ENCODE measurements at regions of chr4 and their contacts with region 1.

Region 1: GRCh38 chr4:90293320-90293719 is 166.1 kb downstream of the CCSER1 start:
- DNase-seq: peak; percentile 27
- ATAC-seq: no peak
- H3K4me3 ChIP-seq: no peak overlapping the region
- H3K27ac ChIP-seq: no peak overlapping the region
- H3K4me1 ChIP-seq: no peaks in the 10 kb centered on the region
- H3K27me3 ChIP-seq: no peaks in the 10 kb centered on the region
- CTCF ChIP-seq: peak; percentile 44
- POLR2A ChIP-seq: no peak
- RAD21 ChIP-seq: peak; percentile 49

Region 2: GRCh38 chr4:89434364-89434988 is 858.8 kb before region 1 on chr4:
- CTCF ChIA-PET with region 1: no interaction called
- POLR2A ChIA-PET with region 1: no interaction called
- dilution Hi-C with region 1: no loop called
- in situ Hi-C with region 1: no loop called
- intact Hi-C with region 1: loop called (anchors 5 kb)
- DNase-seq: peak; percentile 35
- ATAC-seq: peak; percentile 84
- H3K4me3 ChIP-seq: no peak overlapping the region
- H3K27ac ChIP-seq: no peak overlapping the region
- H3K4me1 ChIP-seq: no peaks in the 10 kb centered on the region
- H3K27me3 ChIP-seq: 0 out of 2 replicates have a peak, but pooled peaks cover 1% of the 10 kb centered on the region
- CTCF ChIP-seq: peak; percentile 69
- POLR2A ChIP-seq: no peak
- RAD21 ChIP-seq: peak; percentile 76

Region 3: DNA sequence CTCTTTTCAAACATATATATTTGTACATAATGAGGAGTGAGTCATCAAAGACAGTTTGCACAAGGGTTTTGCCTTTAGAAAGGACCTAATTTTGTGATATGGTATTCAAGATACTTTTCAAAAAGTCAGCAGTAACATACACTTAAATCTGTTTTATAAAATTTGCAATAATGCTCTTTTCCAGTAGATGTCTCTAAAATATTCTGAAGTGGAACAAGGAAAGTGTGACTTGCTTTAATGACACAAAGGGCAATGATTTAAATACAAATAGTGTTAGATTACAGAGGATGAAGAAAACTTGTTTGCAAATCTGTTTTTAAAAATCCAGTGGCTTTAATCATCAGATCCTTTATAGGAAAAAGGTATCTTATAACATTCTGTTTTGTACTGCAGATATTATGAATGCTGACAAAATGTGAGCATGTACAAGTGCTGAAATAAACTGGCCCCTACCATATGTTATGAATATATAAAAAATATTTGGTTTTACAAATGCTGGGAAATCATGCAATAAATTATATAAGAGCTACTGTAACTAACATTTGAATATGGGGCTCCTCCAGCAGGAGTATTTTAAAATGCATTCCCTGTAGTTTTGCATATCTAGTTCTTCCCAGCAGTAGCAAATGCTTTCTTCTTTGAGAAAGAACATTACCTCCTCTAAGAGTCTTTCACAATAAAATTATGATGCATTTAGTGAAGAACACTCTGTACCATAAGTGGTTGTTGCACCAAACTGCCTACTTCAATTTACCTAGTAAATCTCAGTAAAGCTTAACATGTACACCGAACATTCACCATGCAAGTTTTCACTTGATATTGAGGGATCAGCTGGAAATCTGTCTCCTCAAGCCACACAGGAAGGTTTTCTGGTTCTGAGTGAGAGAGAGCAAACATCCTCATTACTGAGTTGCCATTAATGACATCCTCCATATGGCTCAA is 378.4 kb before region 1 on chr4:
- CTCF ChIA-PET with region 1: no interaction called
- POLR2A ChIA-PET with region 1: no interaction called
- dilution Hi-C with region 1: no loop called
- in situ Hi-C with region 1: no loop called
- intact Hi-C with region 1: loop called (anchors 5 kb)
- DNase-seq: no peak
- ATAC-seq: no peak
- H3K4me3 ChIP-seq: no peak overlapping the region
- H3K27ac ChIP-seq: no peak overlapping the region
- H3K4me1 ChIP-seq: no peaks in the 10 kb centered on the region
- H3K27me3 ChIP-seq: no peaks in the 10 kb centered on the region
- CTCF ChIP-seq: no peak
- POLR2A ChIP-seq: no peak
- RAD21 ChIP-seq: no peak

Region 4: DNA sequence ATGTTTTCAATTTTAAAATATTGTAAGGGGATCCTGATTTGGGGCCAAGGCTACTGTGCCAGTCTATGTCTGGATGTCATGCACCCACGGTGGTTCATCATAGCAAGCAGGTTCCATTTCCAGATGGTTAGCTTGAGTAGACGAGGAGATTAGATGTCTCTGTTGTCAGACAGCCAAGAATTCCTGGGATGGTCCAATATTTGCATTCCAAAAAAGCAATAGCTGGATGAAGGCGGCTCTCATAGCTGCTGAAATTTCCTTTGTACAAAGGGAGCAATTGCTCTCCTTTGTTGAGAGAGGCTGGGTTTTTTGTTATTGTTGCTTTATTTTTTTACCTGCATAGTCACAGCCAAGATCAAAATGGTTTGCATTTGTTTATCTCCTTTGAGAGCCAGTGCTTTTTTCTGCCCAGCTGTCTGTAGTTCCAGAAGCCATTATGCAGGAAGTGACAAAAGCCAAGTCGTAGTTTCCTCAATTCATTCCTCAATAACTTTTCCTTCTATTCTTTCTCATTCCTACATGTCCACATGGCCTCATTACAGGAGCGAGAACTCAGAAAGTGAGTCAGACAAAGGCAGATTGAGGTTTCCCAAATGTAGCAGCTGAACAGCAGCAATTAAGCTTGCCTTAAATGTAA is 290.8 kb before region 1 on chr4:
- CTCF ChIA-PET with region 1: no interaction called
- POLR2A ChIA-PET with region 1: no interaction called
- dilution Hi-C with region 1: no loop called
- in situ Hi-C with region 1: loop called (anchors 25 kb)
- intact Hi-C with region 1: no loop called
- DNase-seq: no peak
- ATAC-seq: no peak
- H3K4me3 ChIP-seq: no peak overlapping the region
- H3K27ac ChIP-seq: no peak overlapping the region
- H3K4me1 ChIP-seq: no peaks in the 10 kb centered on the region
- H3K27me3 ChIP-seq: no peaks in the 10 kb centered on the region
- CTCF ChIP-seq: no peak
- POLR2A ChIP-seq: no peak
- RAD21 ChIP-seq: no peak

Region 5: DNA sequence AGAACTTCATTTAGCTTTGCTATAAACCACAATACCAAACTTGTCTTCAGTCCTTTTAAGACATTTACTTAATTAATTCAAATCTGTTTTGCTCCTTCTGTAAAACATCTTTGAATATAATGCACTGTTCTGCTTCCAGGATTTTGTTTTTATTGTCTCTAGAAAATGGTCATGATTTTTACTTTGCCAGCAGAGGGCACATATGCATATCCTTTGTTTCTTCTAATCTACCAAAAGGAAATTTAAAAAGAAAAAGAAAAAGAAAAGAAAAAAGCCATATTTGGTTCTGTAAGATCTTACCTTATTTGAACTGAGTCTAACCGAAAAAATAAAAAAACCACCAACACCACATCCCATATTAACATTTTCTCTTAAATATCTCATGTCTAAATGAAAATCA is 268.1 kb before region 1 on chr4:
- CTCF ChIA-PET with region 1: no interaction called
- POLR2A ChIA-PET with region 1: no interaction called
- dilution Hi-C with region 1: no loop called
- in situ Hi-C with region 1: loop called (anchors 25 kb)
- intact Hi-C with region 1: loop called (anchors 5 kb)
- DNase-seq: peak; percentile 0
- ATAC-seq: no peak
- H3K4me3 ChIP-seq: no peak overlapping the region
- H3K27ac ChIP-seq: no peak overlapping the region
- H3K4me1 ChIP-seq: no peaks in the 10 kb centered on the region
- H3K27me3 ChIP-seq: no peaks in the 10 kb centered on the region
- CTCF ChIP-seq: 0 out of 2 replicates have a peak, but pooled peaks have one; percentile 30
- POLR2A ChIP-seq: no peak
- RAD21 ChIP-seq: no peak

Region 6: GRCh38 chr4:90198086-90198847 is 95.1 kb before region 1 on chr4:
- CTCF ChIA-PET with region 1: no interaction called
- POLR2A ChIA-PET with region 1: no interaction called
- dilution Hi-C with region 1: no loop called
- in situ Hi-C with region 1: no loop called
- intact Hi-C with region 1: no loop called
- DNase-seq: no peak
- ATAC-seq: no peak
- H3K4me3 ChIP-seq: no peak overlapping the region
- H3K27ac ChIP-seq: no peak overlapping the region
- H3K4me1 ChIP-seq: no peaks in the 10 kb centered on the region
- H3K27me3 ChIP-seq: no peaks in the 10 kb centered on the region
- CTCF ChIP-seq: no peak
- POLR2A ChIP-seq: no peak
- RAD21 ChIP-seq: no peak

Region 7: DNA sequence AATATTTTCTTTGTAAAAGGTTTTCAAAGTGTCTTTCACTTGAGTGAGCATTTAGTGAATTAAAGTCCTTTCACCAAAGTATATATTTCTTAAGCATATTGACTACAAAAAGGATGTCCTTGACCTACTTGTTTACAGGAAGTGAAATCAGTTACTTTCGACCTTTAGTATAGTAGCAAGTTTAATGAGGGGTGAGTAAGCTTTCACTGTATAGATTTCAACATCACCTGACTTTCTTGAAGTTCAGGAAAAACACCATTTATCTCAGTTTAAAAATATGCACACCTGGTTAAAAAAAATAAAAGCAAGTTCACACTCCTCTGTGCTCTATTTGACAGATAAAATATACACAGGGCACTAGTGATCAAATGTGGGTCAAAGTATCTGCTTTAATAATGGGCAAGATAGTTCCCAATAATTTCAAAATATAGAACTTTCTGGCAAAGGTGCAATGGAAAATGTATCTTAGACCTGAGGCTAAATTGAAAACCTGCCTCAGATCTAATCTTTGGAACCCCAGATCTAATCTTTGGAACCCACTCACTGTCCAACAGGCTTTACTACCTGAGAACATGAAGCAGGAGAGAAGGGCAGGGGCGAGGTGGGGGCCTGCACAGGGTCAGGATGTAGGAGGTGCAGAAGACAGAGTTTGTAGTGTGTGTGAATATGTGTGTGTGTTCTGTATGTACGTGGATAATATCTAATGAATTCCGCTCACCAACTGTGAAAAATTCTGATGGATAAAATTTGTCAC is 77.9 kb before region 1 on chr4:
- CTCF ChIA-PET with region 1: no interaction called
- POLR2A ChIA-PET with region 1: no interaction called
- dilution Hi-C with region 1: no loop called
- in situ Hi-C with region 1: no loop called
- intact Hi-C with region 1: no loop called
- DNase-seq: no peak
- ATAC-seq: no peak
- H3K4me3 ChIP-seq: no peak overlapping the region
- H3K27ac ChIP-seq: no peak overlapping the region
- H3K4me1 ChIP-seq: no peaks in the 10 kb centered on the region
- H3K27me3 ChIP-seq: no peaks in the 10 kb centered on the region
- CTCF ChIP-seq: no peak
- POLR2A ChIP-seq: no peak
- RAD21 ChIP-seq: no peak

Measured in IMR-90 (cell line).